OCI-LY7 (cell line): ENCODE measurements at regions of chr12 and their contacts with region 1.

Region 1: GRCh38 chr12:68772714-68773113 is 26.7 kb downstream of the SLC35E3 start:
- DNase-seq: peak; percentile 96
- H3K4me3 ChIP-seq: peak overlapping the region; percentile 45
- H3K27ac ChIP-seq: peak overlapping the region; percentile 100
- H3K4me1 ChIP-seq: peaks cover 81% of the 10 kb centered on the region
- CTCF ChIP-seq: no peak

Region 2: DNA sequence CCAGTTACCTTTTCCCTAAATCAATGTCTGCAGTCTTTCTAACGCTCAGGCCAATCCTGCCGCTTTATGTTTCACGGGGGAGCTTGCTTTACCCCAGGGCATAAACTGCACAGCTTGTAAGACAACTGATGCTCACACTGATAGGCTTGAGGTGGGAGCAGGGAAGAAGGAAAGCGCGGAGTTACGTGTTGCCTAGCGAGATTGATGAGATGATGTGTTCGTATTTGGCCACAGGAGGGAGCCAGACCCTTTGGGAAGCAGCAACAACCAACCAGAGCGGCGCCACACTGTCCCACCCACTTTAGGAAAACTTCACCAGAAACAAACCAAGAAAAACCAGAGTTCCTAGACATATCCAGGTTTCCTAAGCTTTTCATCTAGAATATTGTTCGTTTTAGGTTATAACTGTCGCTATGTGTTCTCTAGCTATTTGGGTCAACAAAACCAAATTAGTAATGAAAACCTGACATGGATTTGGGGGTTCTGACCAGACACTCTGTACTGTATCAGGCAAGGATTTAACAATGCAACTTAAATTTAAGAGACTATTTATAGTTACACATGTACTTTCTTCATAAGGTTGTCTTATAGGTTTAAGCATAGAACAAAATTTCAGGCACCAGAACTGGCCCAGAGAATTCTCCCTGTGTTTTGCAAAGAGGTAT is 549.5 kb before region 1 on chr12:
- CTCF ChIA-PET with region 1: no interaction called
- POLR2A ChIA-PET with region 1: no interaction called
- intact Hi-C with region 1: no loop called
- DNase-seq: peak; percentile 78
- H3K4me3 ChIP-seq: no peak overlapping the region
- H3K27ac ChIP-seq: no peak overlapping the region
- H3K4me1 ChIP-seq: peaks cover 3% of the 10 kb centered on the region
- CTCF ChIP-seq: peak; percentile 96

Region 3: GRCh38 chr12:68745904-68746571 is 26.7 kb before region 1 on chr12 and contains the start of gene SLC35E3:
- CTCF ChIA-PET with region 1: interaction called, 3 read pairs
- POLR2A ChIA-PET with region 1: interaction called, 15 read pairs
- intact Hi-C with region 1: loop called (anchors 2 kb)
- DNase-seq: peak; percentile 96
- H3K4me3 ChIP-seq: peak within 1 kb of the TSS; percentile 92
- H3K27ac ChIP-seq: peak within 1 kb of the TSS; percentile 59
- H3K4me1 ChIP-seq: peaks cover 46% of the 10 kb centered on the region
- CTCF ChIP-seq: no peak
- total RNA-seq, gene SLC35E3: 24.6 and 26.6 TPM in 2 replicates

Region 4: GRCh38 chr12:68786929-68787328 is 14.2 kb after region 1 on chr12:
- CTCF ChIA-PET with region 1: no interaction called
- POLR2A ChIA-PET with region 1: interaction called, 31 read pairs
- intact Hi-C with region 1: loop called (anchors 2 kb)
- DNase-seq: no peak
- H3K4me3 ChIP-seq: peak overlapping the region; percentile 7
- H3K27ac ChIP-seq: peak overlapping the region; percentile 77
- H3K4me1 ChIP-seq: peaks cover 78% of the 10 kb centered on the region
- CTCF ChIP-seq: peak; percentile 65

Region 5: DNA sequence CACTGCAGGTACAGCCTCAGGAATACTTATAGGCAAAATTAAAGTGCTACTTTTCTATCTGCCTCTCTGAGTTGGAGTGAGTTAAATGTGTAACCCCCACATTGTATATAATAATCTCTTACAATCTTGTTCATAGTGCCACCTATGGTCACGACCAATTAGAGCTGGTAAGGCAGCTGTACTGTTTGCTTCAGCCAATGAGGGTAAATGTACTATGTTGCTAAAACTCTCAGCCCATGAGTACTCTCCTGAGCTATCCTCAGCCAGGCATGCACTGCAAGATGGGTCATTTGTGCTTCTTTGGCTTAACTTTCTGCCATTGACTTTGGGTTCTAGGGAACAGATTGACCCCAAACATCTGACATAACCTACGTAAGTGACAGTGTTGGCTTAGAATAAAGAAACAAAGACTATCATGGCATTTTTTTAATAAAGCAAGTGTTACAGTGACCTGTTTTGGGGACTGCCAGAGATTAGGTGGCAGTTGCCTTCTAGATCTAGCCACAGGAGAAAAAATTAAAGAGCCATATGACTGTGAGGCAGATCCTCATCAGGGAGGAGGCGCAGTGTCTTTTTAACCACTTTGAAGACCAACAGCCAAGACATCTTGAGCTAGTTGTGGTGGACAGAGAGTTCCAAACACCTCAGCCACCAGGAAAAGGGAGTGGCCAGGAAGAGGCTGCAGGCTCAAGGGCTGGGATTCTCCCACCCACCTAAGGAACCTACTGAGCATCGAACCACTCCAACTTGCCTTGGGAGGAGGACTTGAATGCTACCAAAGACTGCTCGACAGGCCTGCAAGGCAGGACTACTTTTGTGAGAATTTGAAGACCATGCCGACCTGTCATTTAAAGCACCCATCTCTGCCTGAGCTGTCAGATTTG is 20.5 kb after region 1 on chr12:
- CTCF ChIA-PET with region 1: interaction called, 3 read pairs
- POLR2A ChIA-PET with region 1: interaction called, 31 read pairs
- intact Hi-C with region 1: no loop called
- DNase-seq: peak; percentile 87
- H3K4me3 ChIP-seq: no peak overlapping the region
- H3K27ac ChIP-seq: peak overlapping the region; percentile 76
- H3K4me1 ChIP-seq: peaks cover 64% of the 10 kb centered on the region
- CTCF ChIP-seq: peak; percentile 61

Region 6: GRCh38 chr12:69130064-69130463 is 357.4 kb after region 1 on chr12:
- CTCF ChIA-PET with region 1: no interaction called
- POLR2A ChIA-PET with region 1: no interaction called
- intact Hi-C with region 1: no loop called
- DNase-seq: no peak
- H3K4me3 ChIP-seq: no peak overlapping the region
- H3K27ac ChIP-seq: no peak overlapping the region
- H3K4me1 ChIP-seq: no peaks in the 10 kb centered on the region
- CTCF ChIP-seq: peak; percentile 56